CD8-positive, alpha-beta T cell (primary cell): ENCODE measurements at regions of chr16 and their contacts with region 1.

Region 1: DNA sequence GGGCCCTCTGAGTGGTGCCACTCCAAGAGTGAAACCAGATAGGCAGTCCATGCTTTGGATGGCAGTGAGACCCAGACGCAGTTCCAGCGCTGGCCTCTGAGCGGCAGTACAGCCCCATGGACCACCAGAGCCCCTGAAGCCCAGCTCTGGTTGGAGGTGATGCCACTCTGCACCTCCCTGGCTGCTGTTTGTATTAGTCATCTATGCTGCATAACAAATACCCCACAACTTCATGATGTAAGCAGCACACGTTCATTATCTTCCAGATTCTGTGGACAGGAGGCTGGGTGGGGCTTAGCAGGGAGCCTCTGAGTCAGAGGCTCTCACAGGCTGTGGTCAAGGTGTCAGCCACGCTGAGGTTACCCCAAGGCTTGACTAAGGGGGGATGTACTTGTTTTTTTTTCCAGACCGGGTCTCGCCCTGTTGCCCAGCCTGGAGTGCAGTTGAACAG is 5.1 kb upstream of the NME4 start:
- DNase-seq: peak; percentile 55 to 93 (median 81)
- ATAC-seq: peak; percentile 95
- H3K4me3 ChIP-seq: no peak overlapping the region
- H3K4me3 Mint-ChIP-seq: no peak overlapping the region
- H3K27ac ChIP-seq: peak overlapping the region in 1 of 2 experiments; percentile 64
- H3K27ac Mint-ChIP-seq: no peak overlapping the region
- H3K4me1 ChIP-seq: peaks cover 18% of the 10 kb centered on the region
- H3K4me1 Mint-ChIP-seq: peaks cover 18% of the 10 kb centered on the region
- H3K27me3 ChIP-seq: no peaks in the 10 kb centered on the region
- H3K27me3 Mint-ChIP-seq: no peaks in the 10 kb centered on the region
- CTCF ChIP-seq: peak; percentile 77

Region 2: DNA sequence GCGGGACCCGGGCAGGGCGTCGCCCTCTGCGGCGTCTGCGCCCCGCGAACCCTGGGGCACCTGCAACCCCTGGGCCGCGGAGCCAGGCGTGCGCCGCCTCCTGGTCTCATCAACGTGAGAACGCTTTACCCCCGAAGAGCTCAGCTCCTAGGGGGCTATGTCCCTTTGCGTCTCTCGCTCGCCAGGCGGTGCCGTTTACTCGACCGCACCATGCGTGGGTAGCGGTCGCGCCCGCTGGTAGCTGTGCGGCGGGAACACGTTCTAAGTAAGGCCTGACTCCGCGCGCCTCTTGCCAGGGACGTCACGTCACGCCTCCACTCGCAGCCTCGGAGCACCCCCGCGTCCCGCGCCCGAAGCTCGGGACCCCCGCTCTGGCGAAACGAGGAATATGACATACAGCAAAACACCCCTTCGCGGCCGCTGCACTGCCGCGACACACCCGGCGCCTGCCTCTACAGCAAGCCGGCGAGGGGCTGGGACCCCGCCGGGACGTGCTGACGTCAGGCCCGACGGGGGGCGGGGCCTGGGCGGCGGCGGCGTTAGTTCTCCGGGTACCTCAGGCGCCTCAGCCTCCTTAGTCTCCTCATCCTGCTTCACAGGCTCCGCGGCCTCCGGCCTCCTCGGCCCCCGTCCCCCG is 33.3 kb after region 1 on chr16 and contains the start of gene RAB11FIP3:
- CTCF ChIA-PET with region 1: no interaction called
- POLR2A ChIA-PET with region 1: no interaction called
- intact Hi-C with region 1: loop called in 1 of 2 experiments (anchors 2 kb)
- DNase-seq: peak; percentile 66 to 92 (median 83)
- ATAC-seq: peak; percentile 89
- H3K4me3 ChIP-seq: peak within 1 kb of the TSS; percentile 78 to 86
- H3K4me3 Mint-ChIP-seq: peak within 1 kb of the TSS; percentile 90
- H3K27ac ChIP-seq: peak within 1 kb of the TSS; percentile 81 to 93
- H3K27ac Mint-ChIP-seq: peak within 1 kb of the TSS; percentile 96
- H3K4me1 ChIP-seq: peaks cover 21% of the 10 kb centered on the region
- H3K4me1 Mint-ChIP-seq: peaks cover 36% of the 10 kb centered on the region
- H3K27me3 ChIP-seq: peaks cover 0 to 3% of the 10 kb centered on the region in 2 experiments
- H3K27me3 Mint-ChIP-seq: peaks cover 3% of the 10 kb centered on the region
- CTCF ChIP-seq: peak; percentile 40
- total RNA-seq, gene RAB11FIP3: 26.4 to 27.5 TPM

Region 3: GRCh38 chr16:489606-490005 is 97.7 kb after region 1 on chr16:
- CTCF ChIA-PET with region 1: interaction called, 4 read pairs
- POLR2A ChIA-PET with region 1: no interaction called
- intact Hi-C with region 1: loop called in 1 of 2 experiments (anchors 5 kb)
- DNase-seq: no peak
- ATAC-seq: no peak
- H3K4me3 ChIP-seq: no peak overlapping the region
- H3K4me3 Mint-ChIP-seq: no peak overlapping the region
- H3K27ac ChIP-seq: no peak overlapping the region
- H3K27ac Mint-ChIP-seq: no peak overlapping the region
- H3K4me1 ChIP-seq: no peaks in the 10 kb centered on the region
- H3K4me1 Mint-ChIP-seq: no peaks in the 10 kb centered on the region
- H3K27me3 ChIP-seq: no peaks in the 10 kb centered on the region
- H3K27me3 Mint-ChIP-seq: no peaks in the 10 kb centered on the region
- CTCF ChIP-seq: no peak

Region 4: DNA sequence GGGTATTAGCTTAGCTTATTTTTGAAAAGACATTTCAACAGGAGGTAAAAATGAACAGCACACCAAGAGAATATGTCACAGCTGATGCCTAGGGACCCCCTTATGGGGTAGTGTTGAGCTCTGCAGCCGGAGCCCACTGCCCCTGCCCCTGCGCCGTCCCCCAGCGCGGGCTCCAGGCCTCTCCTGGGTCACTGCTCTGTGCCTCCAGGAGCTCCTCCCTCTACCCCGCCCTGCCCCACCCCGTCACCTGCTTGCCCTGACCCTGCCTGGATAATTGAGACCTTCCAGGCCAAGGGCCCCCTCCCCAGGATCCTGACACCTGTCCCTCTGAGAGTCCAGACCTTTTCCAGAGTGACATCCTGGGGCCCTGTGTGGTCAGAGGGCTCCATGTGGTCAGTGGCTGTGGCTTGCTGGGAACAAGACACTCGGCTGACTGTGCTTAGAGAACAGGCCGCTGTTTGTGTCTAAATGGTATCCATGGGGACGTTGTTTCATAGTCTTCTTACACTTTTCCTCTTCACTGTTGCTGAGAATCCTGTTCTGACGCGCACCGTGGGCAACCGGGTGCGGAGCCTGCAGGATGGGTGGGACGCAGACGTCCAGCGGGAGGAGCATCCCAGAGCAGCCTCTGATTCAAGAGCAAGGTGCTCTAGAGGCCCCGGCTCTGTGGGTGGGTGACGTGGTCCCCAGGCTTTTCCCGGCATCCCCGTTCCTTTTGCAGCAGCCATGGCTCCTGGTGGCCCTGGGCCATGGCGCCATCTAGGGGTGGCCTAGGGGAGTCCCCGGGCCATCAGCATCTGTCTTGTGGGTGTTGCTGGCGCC is 218.8 kb after region 1 on chr16:
- CTCF ChIA-PET with region 1: interaction called, 5 read pairs
- POLR2A ChIA-PET with region 1: no interaction called
- intact Hi-C with region 1: loop called in 1 of 2 experiments (anchors 2 kb)
- DNase-seq: peak in 8 of 9 experiments; percentile 32 to 73 (median 65)
- ATAC-seq: peak; percentile 84
- H3K4me3 ChIP-seq: no peak overlapping the region
- H3K4me3 Mint-ChIP-seq: no peak overlapping the region
- H3K27ac ChIP-seq: no peak overlapping the region
- H3K27ac Mint-ChIP-seq: no peak overlapping the region
- H3K4me1 ChIP-seq: no peaks in the 10 kb centered on the region
- H3K4me1 Mint-ChIP-seq: peaks cover 6% of the 10 kb centered on the region
- H3K27me3 ChIP-seq: no peaks in the 10 kb centered on the region
- H3K27me3 Mint-ChIP-seq: no peaks in the 10 kb centered on the region
- CTCF ChIP-seq: peak; percentile 68

Region 5: GRCh38 chr16:660459-661183 is 268.7 kb after region 1 on chr16:
- CTCF ChIA-PET with region 1: no interaction called
- POLR2A ChIA-PET with region 1: no interaction called
- intact Hi-C with region 1: loop called in 1 of 2 experiments (anchors 5 kb)
- DNase-seq: peak in 8 of 9 experiments; percentile 43 to 78 (median 68)
- ATAC-seq: peak; percentile 88
- H3K4me3 ChIP-seq: no peak overlapping the region
- H3K4me3 Mint-ChIP-seq: no peak overlapping the region
- H3K27ac ChIP-seq: no peak overlapping the region
- H3K27ac Mint-ChIP-seq: no peak overlapping the region
- H3K4me1 ChIP-seq: peaks cover 6% of the 10 kb centered on the region
- H3K4me1 Mint-ChIP-seq: peaks cover 4% of the 10 kb centered on the region
- H3K27me3 ChIP-seq: no peaks in the 10 kb centered on the region
- H3K27me3 Mint-ChIP-seq: no peaks in the 10 kb centered on the region
- CTCF ChIP-seq: no peak